WTC11 (cell line): ENCODE measurements at regions of chr20 and their contacts with region 1.

Region 1: DNA sequence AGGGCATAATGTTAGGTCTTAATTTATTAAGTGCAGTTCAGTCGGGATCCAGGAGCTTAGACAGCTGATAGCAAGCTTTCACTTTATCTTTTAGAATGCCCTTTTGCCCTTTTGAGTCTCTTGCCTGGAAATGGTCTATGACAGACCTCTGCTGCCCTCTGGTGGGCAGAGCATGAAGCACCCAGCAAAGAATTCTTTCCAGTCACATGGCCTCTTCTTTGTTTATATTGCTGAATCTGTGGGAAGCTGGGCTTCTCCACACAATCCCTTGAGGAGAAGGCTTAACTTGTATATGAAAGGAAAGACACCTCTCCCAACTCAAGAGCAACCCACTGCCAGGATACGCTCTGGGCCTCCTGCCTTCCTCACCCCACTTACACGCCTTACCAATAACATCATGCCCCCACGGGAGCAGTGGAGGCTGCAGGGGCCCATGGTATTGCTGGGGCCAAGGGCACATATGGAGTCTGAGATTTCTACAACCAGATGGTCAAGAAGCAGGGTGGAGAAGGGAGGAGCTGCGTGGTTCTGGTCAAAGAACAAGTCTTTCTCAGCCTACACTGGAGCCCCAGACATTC is 20.4 kb downstream of the WFDC3 start:
- DNase-seq: peak; percentile 87
- ATAC-seq: peak; percentile 79
- H3K4me3 Mint-ChIP-seq: no peak overlapping the region
- H3K27ac Mint-ChIP-seq: peak overlapping the region; percentile 73
- H3K4me1 Mint-ChIP-seq: peaks cover 29% of the 10 kb centered on the region
- H3K27me3 Mint-ChIP-seq: no peaks in the 10 kb centered on the region
- CTCF ChIP-seq: peak; percentile 95

Region 2: GRCh38 chr20:45373353-45374100 is 397.7 kb before region 1 on chr20:
- CTCF ChIA-PET with region 1: interaction called, 30 read pairs
- POLR2A ChIA-PET with region 1: no interaction called
- DNase-seq: peak; percentile 94
- ATAC-seq: peak; percentile 89
- H3K4me3 Mint-ChIP-seq: peak overlapping the region; percentile 73
- H3K27ac Mint-ChIP-seq: no peak overlapping the region
- H3K4me1 Mint-ChIP-seq: peaks cover 13% of the 10 kb centered on the region
- H3K27me3 Mint-ChIP-seq: peaks cover 6% of the 10 kb centered on the region
- CTCF ChIP-seq: peak; percentile 92

Region 3: GRCh38 chr20:45459606-45460005 is 311.7 kb before region 1 on chr20:
- CTCF ChIA-PET with region 1: interaction called, 35 read pairs
- POLR2A ChIA-PET with region 1: no interaction called
- DNase-seq: no peak
- ATAC-seq: no peak
- H3K4me3 Mint-ChIP-seq: no peak overlapping the region
- H3K27ac Mint-ChIP-seq: no peak overlapping the region
- H3K4me1 Mint-ChIP-seq: no peaks in the 10 kb centered on the region; the same call in 1 of the 2 replicates
- H3K27me3 Mint-ChIP-seq: no peaks in the 10 kb centered on the region
- CTCF ChIP-seq: no peak

Region 4: DNA sequence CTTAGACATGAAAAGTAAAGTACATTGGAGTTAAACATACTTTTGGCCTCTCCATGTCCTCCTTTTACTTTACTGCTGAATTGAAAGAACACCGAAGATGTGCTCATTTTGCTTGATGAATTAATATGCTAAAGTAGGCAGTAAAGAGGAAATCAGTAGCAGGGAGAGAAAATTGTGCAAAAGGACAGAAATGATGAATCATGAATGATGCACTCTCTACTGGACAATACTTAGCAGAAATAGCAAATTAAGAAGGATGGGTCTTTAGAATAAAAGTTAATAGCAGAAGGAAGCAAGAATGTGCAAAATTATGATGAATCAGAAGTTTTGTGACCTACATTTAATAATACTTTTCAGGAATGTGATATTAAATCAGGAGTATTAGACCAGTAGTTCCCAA is 247.4 kb before region 1 on chr20:
- CTCF ChIA-PET with region 1: interaction called, 11 read pairs
- POLR2A ChIA-PET with region 1: no interaction called
- DNase-seq: no peak
- ATAC-seq: no peak
- H3K4me3 Mint-ChIP-seq: no peak overlapping the region
- H3K27ac Mint-ChIP-seq: no peak overlapping the region
- H3K4me1 Mint-ChIP-seq: no peaks in the 10 kb centered on the region
- H3K27me3 Mint-ChIP-seq: no peaks in the 10 kb centered on the region; the same call in 1 of the 2 replicates
- CTCF ChIP-seq: no peak

Region 5: GRCh38 chr20:45583502-45583901 is 187.8 kb before region 1 on chr20:
- CTCF ChIA-PET with region 1: interaction called, 13 read pairs
- POLR2A ChIA-PET with region 1: no interaction called
- DNase-seq: no peak
- ATAC-seq: peak; percentile 94
- H3K4me3 Mint-ChIP-seq: peak overlapping the region; percentile 36
- H3K27ac Mint-ChIP-seq: peak overlapping the region; percentile 85
- H3K4me1 Mint-ChIP-seq: peaks cover 26% of the 10 kb centered on the region
- H3K27me3 Mint-ChIP-seq: no peaks in the 10 kb centered on the region
- CTCF ChIP-seq: no peak

Region 6: DNA sequence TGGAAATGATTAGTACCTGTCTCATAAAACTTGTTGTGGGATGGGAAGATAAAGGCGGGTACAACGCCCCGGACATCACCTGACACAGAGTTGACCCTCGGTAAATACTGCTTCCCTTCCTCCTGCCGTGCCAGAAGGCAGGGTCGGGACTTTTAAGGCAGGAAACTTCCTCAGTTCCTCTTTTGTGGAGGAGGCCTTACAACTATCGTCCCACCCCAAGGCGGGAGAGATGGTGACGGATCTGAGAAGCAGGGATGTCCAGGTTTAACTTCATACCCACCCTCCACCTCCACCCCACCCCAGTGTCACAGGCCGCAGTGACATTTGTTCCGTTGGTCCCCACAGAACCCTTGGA is 21.0 kb after region 1 on chr20:
- CTCF ChIA-PET with region 1: interaction called, 13 read pairs
- POLR2A ChIA-PET with region 1: no interaction called
- DNase-seq: no peak
- ATAC-seq: no peak
- H3K4me3 Mint-ChIP-seq: peak overlapping the region; percentile 84
- H3K27ac Mint-ChIP-seq: peak overlapping the region; percentile 63; the same call in 1 of the 2 replicates
- H3K4me1 Mint-ChIP-seq: peaks cover 8% of the 10 kb centered on the region
- H3K27me3 Mint-ChIP-seq: no peaks in the 10 kb centered on the region
- CTCF ChIP-seq: no peak

Region 7: GRCh38 chr20:45833030-45833882 is 62.0 kb after region 1 on chr20 and contains the start of gene SNX21:
- CTCF ChIA-PET with region 1: no interaction called
- POLR2A ChIA-PET with region 1: no interaction called
- DNase-seq: peak; percentile 86
- ATAC-seq: peak; percentile 91
- H3K4me3 Mint-ChIP-seq: peak within 1 kb of the TSS; percentile 76
- H3K27ac Mint-ChIP-seq: peak within 1 kb of the TSS; percentile 88
- H3K4me1 Mint-ChIP-seq: peaks cover 18% of the 10 kb centered on the region
- H3K27me3 Mint-ChIP-seq: no peaks in the 10 kb centered on the region
- CTCF ChIP-seq: no peak
- total RNA-seq, gene SNX21: 17.9 to 23.1 TPM (median 21.7 TPM) in 3 replicates

Region 8: DNA sequence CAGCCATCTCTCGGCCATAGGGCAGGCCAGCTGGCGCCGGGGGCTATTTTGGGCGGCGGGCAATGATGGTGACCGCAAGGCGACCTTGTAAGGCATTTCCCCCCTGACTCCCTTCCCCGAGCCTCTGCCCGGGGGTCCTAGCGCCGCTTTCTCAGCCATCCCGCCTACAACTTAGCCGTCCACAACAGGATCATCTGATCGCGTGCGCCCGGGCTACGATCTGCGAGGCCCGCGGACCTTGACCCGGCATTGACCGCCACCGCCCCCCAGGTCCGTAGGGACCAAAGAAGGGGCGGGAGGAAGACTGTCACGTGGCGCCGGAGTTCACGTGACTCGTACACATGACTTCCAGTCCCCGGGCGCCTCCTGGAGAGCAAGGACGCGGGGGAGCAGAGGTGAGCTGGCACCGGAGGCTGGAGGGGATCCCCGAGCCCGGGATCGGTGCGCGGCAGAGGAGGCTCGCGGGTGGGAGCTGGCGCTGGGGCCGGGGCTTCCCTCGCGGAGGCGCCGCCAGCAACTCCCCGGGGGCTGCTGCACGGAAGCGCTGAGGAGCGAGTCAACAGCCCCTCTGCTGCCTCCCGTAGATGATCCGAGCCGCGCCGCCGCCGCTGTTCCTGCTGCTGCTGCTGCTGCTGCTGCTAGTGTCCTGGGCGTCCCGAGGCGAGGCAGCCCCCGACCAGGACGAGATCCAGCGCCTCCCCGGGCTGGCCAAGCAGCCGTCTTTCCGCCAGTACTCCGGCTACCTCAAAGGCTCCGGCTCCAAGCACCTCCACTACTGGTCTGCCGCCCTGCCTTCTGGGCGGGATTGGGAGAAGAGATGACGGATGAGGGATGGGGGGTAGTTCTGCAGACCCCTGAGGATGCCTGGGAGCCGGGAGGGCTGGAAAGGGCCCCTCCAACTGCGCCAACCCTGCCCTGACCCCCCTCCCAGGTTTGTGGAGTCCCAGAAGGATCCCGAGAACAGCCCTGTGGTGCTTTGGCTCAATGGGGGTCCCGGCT is 120.0 kb after region 1 on chr20 and contains the starts of genes CTSA and NEURL2:
- CTCF ChIA-PET with region 1: interaction called, 13 read pairs
- POLR2A ChIA-PET with region 1: no interaction called
- DNase-seq: peak; percentile 91
- ATAC-seq: peak; percentile 33
- H3K4me3 Mint-ChIP-seq: peak within 1 kb of the TSS; percentile 87
- H3K27ac Mint-ChIP-seq: peak within 1 kb of the TSS; percentile 78; the same call in 1 of the 2 replicates
- H3K4me1 Mint-ChIP-seq: peaks cover 12% of the 10 kb centered on the region
- H3K27me3 Mint-ChIP-seq: no peaks in the 10 kb centered on the region; the same call in 1 of the 2 replicates
- CTCF ChIP-seq: no peak
- total RNA-seq, gene CTSA: 44.2 to 48.3 TPM (median 47.2 TPM) in 3 replicates
- total RNA-seq, gene NEURL2: 6.1 to 8.3 TPM (median 6.6 TPM) in 3 replicates

Region 9: GRCh38 chr20:45905505-45906079 is 134.3 kb after region 1 on chr20:
- CTCF ChIA-PET with region 1: no interaction called
- POLR2A ChIA-PET with region 1: no interaction called
- DNase-seq: no peak
- ATAC-seq: no peak
- H3K4me3 Mint-ChIP-seq: no peak overlapping the region
- H3K27ac Mint-ChIP-seq: no peak overlapping the region
- H3K4me1 Mint-ChIP-seq: peaks cover 9% of the 10 kb centered on the region
- H3K27me3 Mint-ChIP-seq: no peaks in the 10 kb centered on the region
- CTCF ChIP-seq: no peak